ENCODE measurements at regions of chr19 and their contacts with region 1.

Region 1: GRCh38 chr19:15828429-15829305 is 13.2 kb upstream of the OR10H1 start:
- DNase-seq: no peak
- ATAC-seq: no peak
- H3K4me3 ChIP-seq: no peak overlapping the region
- H3K4me3 Mint-ChIP-seq: no peak overlapping the region
- H3K27ac ChIP-seq: no peak overlapping the region
- H3K27ac Mint-ChIP-seq: no peak overlapping the region
- H3K4me1 ChIP-seq: no peaks in the 10 kb centered on the region
- H3K4me1 Mint-ChIP-seq: peaks cover 0 to 1% (median 0%) of the 10 kb centered on the region in 3 donors
- H3K27me3 ChIP-seq: no peaks in the 10 kb centered on the region
- H3K27me3 Mint-ChIP-seq: no peaks in the 10 kb centered on the region

Region 2: DNA sequence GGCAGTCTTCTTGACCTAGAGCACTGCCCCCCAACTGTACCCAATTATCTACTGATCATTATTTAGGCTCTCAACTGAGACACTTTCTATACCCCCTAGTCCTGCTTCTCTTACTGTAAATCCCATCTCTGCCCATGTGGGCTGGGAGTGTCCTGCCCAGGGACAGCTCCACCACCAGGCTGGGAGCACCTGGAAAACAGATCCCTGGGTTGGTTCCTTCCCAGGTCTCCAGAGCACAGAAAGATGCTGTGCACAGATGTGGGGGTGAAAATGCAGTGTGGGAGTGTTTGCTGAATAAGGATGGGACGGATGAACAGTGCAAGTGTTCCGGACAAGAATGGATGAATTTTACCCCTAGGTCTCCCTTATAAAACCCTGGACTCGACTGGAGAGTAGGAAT is 56.5 kb after region 1 on chr19:
- CTCF ChIA-PET with region 1: no interaction called
- POLR2A ChIA-PET with region 1: no interaction called
- DNase-seq: no peak
- ATAC-seq: no peak
- H3K4me3 ChIP-seq: no peak overlapping the region
- H3K4me3 Mint-ChIP-seq: no peak overlapping the region
- H3K27ac ChIP-seq: no peak overlapping the region
- H3K27ac Mint-ChIP-seq: no peak overlapping the region
- H3K4me1 ChIP-seq: no peaks in the 10 kb centered on the region
- H3K4me1 Mint-ChIP-seq: no peaks in the 10 kb centered on the region
- H3K27me3 ChIP-seq: peaks cover 0 to 16% of the 10 kb centered on the region in 2 experiments
- H3K27me3 Mint-ChIP-seq: peaks cover 7 to 25% of the 10 kb centered on the region in 2 donors

Region 3: GRCh38 chr19:15971222-15971780 is 142.6 kb after region 1 on chr19:
- CTCF ChIA-PET with region 1: no interaction called
- POLR2A ChIA-PET with region 1: no interaction called
- DNase-seq: no peak
- ATAC-seq: no peak
- H3K4me3 ChIP-seq: no peak overlapping the region
- H3K4me3 Mint-ChIP-seq: no peak overlapping the region
- H3K27ac ChIP-seq: no peak overlapping the region
- H3K27ac Mint-ChIP-seq: no peak overlapping the region
- H3K4me1 ChIP-seq: no peaks in the 10 kb centered on the region
- H3K4me1 Mint-ChIP-seq: no peaks in the 10 kb centered on the region
- H3K27me3 ChIP-seq: peaks cover 0 to 10% of the 10 kb centered on the region in 2 experiments
- H3K27me3 Mint-ChIP-seq: peaks cover 30 to 33% of the 10 kb centered on the region in 2 donors

Region 4: DNA sequence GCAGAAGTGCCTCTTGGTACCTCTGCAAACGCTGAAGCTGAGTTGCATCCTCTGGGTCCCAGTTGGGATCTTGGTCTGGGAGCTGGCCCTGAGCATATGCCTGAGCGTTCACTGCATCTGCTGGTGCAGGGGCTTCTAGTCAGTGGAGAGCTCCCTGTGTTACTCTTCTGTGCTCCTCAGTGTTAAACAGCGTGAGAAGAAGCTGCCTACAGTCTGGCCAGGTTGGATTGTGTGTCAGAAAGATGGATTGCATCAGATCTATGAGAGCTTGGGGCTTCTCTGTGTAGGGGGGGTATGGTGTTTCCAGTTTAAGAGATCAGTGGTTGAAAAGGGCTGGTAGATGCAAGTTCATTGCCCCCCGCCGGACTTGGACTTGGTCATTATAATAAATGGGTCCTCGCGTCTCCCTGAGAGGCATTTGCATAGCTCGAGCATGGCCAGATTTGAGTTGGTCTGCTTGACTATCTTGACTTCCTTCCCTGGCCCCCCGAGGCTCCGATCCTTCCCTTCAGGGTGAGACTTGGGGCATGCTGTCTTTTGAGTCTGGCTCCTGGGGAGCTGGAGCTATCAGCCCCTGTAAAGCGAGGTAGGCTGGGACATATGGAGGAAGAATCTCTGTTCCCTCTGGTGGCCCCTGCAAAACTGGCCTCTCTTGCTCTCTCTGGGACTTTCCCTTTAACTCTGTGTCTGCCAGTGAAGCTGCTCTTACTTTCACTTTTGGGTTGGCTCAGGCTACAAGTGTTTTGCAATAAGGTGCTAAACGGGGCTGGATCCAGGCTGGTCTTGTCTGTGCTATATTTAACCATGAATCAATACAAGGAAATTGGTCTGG is 173.0 kb after region 1 on chr19:
- CTCF ChIA-PET with region 1: no interaction called
- POLR2A ChIA-PET with region 1: interaction called in 1 of 2 experiments, 13 read pairs
- DNase-seq: peak in 23 of 35 experiments; percentile 5 to 69 (median 16)
- ATAC-seq: peak; percentile 76 to 95 (median 80)
- H3K4me3 ChIP-seq: peak overlapping the region; percentile 37 to 55
- H3K4me3 Mint-ChIP-seq: peak overlapping the region; percentile 73 to 79 (median 78)
- H3K27ac ChIP-seq: no peak overlapping the region
- H3K27ac Mint-ChIP-seq: peak overlapping the region; percentile 79 to 85
- H3K4me1 ChIP-seq: peaks cover 0 to 21% of the 10 kb centered on the region in 2 experiments
- H3K4me1 Mint-ChIP-seq: peaks cover 23 to 28% (median 24%) of the 10 kb centered on the region in 3 donors
- H3K27me3 ChIP-seq: peaks cover 0 to 5% of the 10 kb centered on the region in 2 experiments
- H3K27me3 Mint-ChIP-seq: no peaks in the 10 kb centered on the region

Measured in T-cell (primary cell).